Esophagus muscularis mucosa (tissue), 4 donors: ENCODE measurements at regions of chr3 and their contacts with region 1.

Region 1: GRCh38 chr3:157204431-157204830 is 44.5 kb upstream of the CCNL1 start:
- DNase-seq: no peak
- H3K4me3 ChIP-seq: no peak overlapping the region
- H3K27ac ChIP-seq: no peak overlapping the region
- H3K4me1 ChIP-seq: peaks cover 3 to 9% (median 7%) of the 10 kb centered on the region in 4 donors
- H3K27me3 ChIP-seq: no peaks in the 10 kb centered on the region
- CTCF ChIP-seq: peak; percentile 45 to 58 (median 55)
- EP300 ChIP-seq: no peak
- POLR2A ChIP-seq: no peak

Region 2: DNA sequence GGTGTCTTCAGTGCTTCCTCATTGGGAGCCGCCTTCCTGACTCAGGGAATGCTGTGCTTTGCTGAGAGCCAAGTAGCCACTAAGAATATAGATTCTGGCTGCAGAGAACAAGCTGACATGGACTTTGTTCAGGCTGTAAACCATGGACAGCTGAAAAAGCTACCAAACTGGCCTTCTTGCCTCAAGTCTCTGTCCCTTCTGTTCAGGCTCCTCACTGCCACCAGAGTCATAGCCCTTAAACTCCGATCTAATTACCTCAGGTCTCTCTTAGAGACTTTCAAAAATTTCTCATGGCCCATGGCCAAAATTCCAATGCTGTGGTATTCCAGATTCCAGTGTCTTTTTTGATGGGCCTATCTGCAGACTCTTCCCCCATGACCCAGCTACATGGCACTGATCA is 212.8 kb after region 1 on chr3:
- intact Hi-C with region 1: no loop called
- DNase-seq: no peak
- H3K4me3 ChIP-seq: no peak overlapping the region
- H3K27ac ChIP-seq: no peak overlapping the region
- H3K4me1 ChIP-seq: no peaks in the 10 kb centered on the region
- H3K27me3 ChIP-seq: no peaks in the 10 kb centered on the region
- CTCF ChIP-seq: no peak
- EP300 ChIP-seq: no peak
- POLR2A ChIP-seq: no peak

Region 3: DNA sequence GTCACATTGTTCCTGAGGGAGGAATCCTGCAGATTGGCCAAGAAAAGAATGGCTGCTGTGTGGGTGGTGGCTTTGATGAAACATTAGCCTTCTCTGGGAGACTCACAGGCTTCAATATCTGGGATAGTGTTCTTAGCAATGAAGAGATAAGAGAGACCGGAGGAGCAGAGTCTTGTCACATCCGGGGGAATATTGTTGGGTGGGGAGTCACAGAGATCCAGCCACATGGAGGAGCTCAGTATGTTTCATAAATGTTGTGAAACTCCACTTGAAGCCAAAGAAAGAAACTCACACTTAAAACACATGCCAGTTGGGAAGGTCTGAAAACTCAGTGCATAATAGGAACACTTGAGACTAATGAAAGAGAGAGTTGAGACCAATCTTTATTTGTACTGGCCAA is 238.3 kb after region 1 on chr3:
- intact Hi-C with region 1: loop called (anchors 5 kb)
- DNase-seq: no peak
- H3K4me3 ChIP-seq: no peak overlapping the region
- H3K27ac ChIP-seq: no peak overlapping the region
- H3K4me1 ChIP-seq: peaks cover 0 to 18% (median 9%) of the 10 kb centered on the region in 4 donors
- H3K27me3 ChIP-seq: no peaks in the 10 kb centered on the region
- CTCF ChIP-seq: no peak
- EP300 ChIP-seq: no peak
- POLR2A ChIP-seq: no peak

Region 4: DNA sequence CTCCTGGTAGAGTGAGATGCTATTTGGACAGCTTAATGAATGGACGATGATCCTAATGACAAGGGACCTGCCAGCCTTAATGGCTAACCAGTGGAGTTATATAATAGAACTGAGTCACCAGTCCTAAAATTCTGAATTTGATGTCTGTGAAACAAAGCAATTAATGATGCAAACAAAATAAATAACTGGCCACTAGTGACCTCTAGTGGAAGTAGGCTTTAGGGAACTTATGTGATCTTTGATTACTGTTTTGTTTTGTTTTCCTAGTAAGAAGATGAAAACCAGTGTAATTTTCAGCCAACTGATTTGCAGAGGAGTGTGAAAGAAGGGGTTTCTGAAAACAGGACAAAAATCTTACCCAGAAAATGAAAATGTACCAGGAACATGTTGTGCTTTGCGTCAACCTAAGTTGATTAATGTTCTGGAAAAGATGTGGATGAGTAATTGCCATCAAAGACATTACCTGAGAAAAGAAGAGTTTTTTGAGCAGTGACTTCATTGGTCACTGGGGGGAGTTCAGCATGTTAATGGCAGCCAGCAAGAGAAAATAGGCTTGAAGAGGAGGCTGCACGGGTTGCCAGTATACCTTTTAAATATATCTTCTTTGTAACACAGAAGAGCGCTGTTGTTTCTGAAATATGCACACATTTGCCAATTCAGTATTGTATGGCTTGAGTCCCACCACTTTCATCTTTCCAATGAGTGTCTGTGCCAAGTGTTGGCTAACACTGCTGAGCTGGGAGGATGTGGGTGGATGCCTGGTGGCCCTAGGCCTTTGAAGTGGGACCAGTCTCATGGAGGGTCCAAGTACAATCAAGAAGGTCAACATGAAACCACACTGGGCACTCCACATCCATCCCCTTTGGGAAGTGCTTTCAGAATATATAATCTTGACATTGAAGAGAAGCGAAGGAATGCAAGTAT is 289.5 kb after region 1 on chr3:
- intact Hi-C with region 1: loop called (anchors 2 kb)
- DNase-seq: no peak
- H3K4me3 ChIP-seq: no peak overlapping the region
- H3K27ac ChIP-seq: no peak overlapping the region
- H3K4me1 ChIP-seq: peaks cover 0 to 3% (median 0%) of the 10 kb centered on the region in 4 donors
- H3K27me3 ChIP-seq: no peaks in the 10 kb centered on the region
- CTCF ChIP-seq: peak; percentile 36 to 60 (median 56)
- EP300 ChIP-seq: no peak
- POLR2A ChIP-seq: no peak